Activated naive CD4-positive, alpha-beta T cell treated with anti-CD3 and anti-CD28 coated beads, Interleukin-2, amount 10 ng/mL, durations not matched to agents 7 days and 5 days (primary cell): ENCODE measurements at regions of chr22 and their contacts with region 1.

Region 1: DNA sequence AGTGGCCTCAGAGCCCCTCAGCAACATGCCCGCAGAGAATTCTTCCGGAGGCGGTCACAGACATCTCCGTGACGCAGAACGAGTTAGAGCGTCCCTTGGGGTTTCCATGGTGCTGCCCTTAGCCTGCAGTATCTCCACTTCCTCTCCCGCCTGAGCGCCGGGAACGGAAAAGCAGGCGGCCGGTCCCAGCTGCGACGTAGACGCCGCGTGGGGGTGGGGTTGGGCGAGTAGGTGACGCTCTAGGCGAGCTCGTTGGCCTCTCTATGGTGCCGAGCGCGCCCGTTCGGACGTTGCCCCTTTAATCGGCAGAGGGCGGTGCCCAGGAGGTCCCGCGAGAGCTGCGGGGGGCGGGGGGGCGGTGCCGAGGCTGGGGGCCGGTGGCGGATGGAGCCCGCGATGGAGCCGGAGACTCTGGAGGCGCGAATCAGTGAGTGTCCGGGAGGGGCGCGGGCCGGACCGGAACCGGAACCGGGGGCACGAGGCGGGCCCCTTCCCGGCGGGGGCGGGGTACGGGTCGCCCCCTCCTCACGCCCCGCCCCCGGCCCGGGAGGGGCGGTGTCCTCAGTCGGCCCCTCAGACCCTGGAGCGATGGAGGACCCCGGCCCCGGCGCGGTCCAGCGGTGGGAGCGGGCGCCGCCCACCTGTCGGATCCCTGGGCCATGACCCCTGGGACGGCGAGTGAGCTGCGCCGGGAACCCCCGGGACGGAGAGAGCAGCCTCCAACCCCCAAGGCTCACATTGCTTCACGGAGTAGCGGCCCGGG is at the start of gene GGA1:
- DNase-seq: peak; percentile 97
- H3K4me3 Mint-ChIP-seq: peak within 1 kb of the TSS; percentile 97
- H3K27ac Mint-ChIP-seq: peak within 1 kb of the TSS; percentile 96
- H3K4me1 Mint-ChIP-seq: peaks cover 63% of the 10 kb centered on the region
- H3K27me3 Mint-ChIP-seq: peaks cover 14% of the 10 kb centered on the region

Region 2: DNA sequence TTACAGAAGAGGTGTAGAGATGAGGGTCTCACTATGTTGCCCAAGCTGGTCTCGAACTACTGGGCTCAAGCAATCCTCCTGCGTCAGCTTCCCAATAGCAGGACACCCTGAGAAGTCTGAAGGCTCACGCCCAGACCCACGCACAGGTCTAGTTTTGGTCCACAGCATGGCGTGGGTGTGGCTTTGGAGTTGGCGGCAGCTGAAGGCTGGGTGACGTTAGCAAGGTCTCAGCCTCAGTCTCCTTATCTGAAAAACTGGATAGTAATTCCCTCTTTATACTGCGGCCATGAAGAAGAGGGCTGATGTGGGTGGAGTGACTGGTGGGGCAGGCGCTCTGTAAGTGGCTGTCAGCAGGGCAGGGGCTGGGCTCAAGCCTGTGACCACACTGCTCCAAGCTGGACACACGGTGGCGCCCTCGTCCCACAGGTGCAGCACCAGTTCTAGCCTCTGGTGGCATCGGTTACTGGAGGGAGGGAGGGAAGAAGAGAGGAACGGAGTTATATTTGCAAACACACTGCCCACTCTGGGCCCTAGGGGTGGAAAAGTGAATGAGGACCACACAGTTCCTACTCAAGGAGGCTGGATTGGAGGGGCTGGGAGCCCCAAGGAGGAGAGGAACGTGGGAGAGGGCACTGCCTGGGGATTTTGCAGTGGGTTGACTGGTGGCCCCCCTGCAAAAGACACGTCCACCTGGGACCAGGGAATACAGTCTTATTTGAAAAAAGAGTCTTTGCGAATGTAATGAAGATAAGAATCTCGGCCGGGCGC is 69.9 kb before region 1 on chr22:
- CTCF ChIA-PET with region 1: interaction called, 21 read pairs
- DNase-seq: peak; percentile 93
- H3K4me3 Mint-ChIP-seq: no peak overlapping the region
- H3K27ac Mint-ChIP-seq: no peak overlapping the region
- H3K4me1 Mint-ChIP-seq: peaks cover 41% of the 10 kb centered on the region
- H3K27me3 Mint-ChIP-seq: peaks cover 67% of the 10 kb centered on the region

Region 3: DNA sequence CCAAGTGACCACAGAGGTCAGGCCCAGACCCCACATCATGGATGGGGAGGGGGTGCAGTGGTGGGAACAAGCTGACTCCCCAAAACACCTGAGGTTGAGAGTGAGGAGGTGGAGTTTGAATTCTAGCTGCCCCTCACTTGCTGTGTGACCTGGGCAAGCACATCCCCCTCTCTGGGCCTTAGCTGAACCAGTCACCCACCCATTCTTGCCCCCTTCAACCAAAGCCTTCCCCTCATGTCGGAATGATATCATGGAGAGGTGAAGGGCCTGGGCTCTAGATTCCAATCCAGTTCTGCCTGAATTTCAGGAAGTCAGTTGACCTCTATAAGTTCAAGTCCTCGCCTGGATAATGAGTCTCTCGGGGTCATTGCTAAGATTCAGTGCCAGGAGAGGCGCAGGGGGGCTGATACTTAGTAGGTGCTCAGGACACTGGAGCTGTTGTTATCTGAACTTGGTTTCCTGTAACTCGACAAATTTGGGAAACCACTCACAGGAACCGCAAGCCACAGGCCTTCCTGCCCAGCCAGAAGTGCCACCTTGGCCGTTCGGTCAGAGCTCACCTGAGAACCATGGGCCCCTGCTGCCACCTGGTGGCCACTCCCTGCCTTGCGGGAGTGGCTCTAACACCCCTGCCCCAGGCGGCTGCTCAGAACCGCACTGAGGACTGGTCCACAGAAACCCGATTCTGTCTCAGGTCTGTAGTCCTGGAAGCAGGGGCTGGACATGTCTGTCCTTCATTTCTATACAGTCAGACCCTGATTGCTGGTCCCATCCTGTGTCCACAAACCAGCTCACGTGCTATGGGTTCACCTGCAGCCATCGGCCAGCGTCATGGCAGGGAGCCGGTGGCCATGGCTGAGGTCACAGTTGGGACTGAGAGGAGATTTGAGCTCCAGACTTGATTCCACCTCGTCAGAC is 41.5 kb before region 1 on chr22:
- CTCF ChIA-PET with region 1: interaction called, 17 read pairs
- DNase-seq: peak; percentile 95
- H3K4me3 Mint-ChIP-seq: peak overlapping the region; percentile 38
- H3K27ac Mint-ChIP-seq: peak overlapping the region; percentile 81
- H3K4me1 Mint-ChIP-seq: peaks cover 23% of the 10 kb centered on the region
- H3K27me3 Mint-ChIP-seq: peaks cover 100% of the 10 kb centered on the region

Region 4: DNA sequence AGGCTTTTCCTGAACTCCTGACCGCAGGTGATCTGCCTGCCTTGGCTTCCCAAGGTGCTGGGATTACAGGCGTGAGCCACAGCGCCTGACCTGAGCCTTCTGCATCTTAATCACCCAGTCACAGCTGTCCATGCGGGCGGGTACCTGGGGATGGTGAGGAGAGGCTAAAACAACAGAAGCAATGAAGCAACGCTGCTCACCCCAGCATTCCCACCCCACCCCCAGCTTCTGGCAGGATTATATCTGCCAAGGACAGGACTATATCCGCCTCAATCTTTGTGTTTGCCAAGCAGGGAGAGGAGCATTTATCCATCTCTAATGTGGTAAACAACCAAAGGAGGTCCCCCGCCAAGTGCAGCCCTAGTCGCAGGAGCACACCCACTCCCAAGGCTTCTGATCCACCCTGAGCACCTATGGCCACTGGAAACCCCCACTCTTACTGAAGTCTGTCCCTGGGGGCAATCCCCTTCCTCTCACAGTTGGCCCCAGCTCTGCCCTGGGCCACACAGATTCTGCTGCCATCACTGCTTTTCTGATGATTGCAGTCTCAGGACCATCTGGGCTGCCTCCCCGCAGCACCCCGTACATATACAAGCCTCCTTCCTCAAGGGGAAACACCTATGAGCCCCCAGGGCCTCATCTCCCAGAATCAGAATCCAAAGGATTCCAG is 20.0 kb before region 1 on chr22:
- CTCF ChIA-PET with region 1: interaction called, 12 read pairs
- DNase-seq: no peak
- H3K4me3 Mint-ChIP-seq: no peak overlapping the region
- H3K27ac Mint-ChIP-seq: no peak overlapping the region
- H3K4me1 Mint-ChIP-seq: peaks cover 13% of the 10 kb centered on the region
- H3K27me3 Mint-ChIP-seq: peaks cover 61% of the 10 kb centered on the region

Region 5: GRCh38 chr22:37633625-37634416 is 25.2 kb after region 1 on chr22:
- CTCF ChIA-PET with region 1: interaction called, 21 read pairs
- DNase-seq: peak; percentile 67
- H3K4me3 Mint-ChIP-seq: peak overlapping the region; percentile 46
- H3K27ac Mint-ChIP-seq: peak overlapping the region; percentile 90
- H3K4me1 Mint-ChIP-seq: peaks cover 73% of the 10 kb centered on the region
- H3K27me3 Mint-ChIP-seq: no peaks in the 10 kb centered on the region

Region 6: GRCh38 chr22:37643225-37643847 is 34.7 kb after region 1 on chr22:
- CTCF ChIA-PET with region 1: interaction called, 10 read pairs
- DNase-seq: peak; percentile 93
- H3K4me3 Mint-ChIP-seq: peak overlapping the region; percentile 49
- H3K27ac Mint-ChIP-seq: peak overlapping the region; percentile 83
- H3K4me1 Mint-ChIP-seq: peaks cover 40% of the 10 kb centered on the region
- H3K27me3 Mint-ChIP-seq: no peaks in the 10 kb centered on the region

Region 7: DNA sequence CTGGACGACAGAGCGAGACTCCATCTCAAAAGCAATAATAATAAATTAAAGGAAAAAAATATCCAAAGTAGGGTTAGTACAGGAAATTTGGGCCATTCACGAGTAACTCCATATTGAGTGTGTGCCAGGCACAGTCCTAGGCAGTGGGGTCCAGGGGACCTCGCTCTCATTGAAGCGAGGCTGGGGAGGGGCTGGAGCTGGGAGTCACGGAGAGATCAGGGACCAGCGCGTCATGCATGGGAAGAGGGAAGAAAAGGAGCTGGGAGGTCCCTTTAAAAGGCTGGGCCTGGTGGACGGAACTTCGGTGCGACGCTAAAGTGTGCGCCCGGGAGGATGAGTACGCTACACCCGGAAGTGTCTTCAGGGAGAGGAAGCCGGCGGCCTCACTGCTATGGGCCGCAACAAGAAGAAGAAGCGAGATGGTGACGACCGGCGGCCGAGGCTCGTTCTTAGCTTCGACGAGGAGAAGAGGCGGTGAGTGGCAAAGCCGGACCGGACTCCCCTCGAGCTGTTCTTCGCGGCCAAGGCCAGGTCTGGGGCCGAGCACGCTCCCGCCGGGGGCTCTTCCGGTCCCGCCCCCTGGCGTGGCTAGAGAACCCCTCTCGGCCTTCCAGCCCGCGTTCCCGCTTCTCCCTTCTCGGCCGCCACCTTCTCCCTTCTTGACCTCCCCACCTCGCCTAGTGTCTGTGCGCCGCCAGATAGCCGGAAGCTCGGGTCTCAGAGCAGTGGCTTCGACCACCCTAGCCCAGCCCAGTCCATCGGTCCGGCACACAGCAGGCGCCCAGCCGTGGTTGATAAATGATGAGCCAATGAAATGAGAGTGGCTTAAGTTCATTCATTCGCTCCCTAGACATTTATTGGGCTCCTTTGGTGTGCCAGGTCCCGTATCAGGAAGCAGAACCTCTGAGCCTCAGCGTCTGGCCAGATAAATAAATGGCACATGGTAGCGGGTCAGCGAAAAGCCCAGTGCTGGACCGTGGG is 77.6 kb after region 1 on chr22 and contains the start of gene NOL12:
- CTCF ChIA-PET with region 1: interaction called, 48 read pairs
- DNase-seq: peak; percentile 83
- H3K4me3 Mint-ChIP-seq: peak within 1 kb of the TSS; percentile 92
- H3K27ac Mint-ChIP-seq: peak within 1 kb of the TSS; percentile 90
- H3K4me1 Mint-ChIP-seq: peaks cover 32% of the 10 kb centered on the region
- H3K27me3 Mint-ChIP-seq: no peaks in the 10 kb centered on the region

Region 8: GRCh38 chr22:37708580-37709444 is 100.2 kb after region 1 on chr22:
- CTCF ChIA-PET with region 1: no interaction called
- DNase-seq: no peak
- H3K4me3 Mint-ChIP-seq: no peak overlapping the region
- H3K27ac Mint-ChIP-seq: no peak overlapping the region
- H3K4me1 Mint-ChIP-seq: no peaks in the 10 kb centered on the region
- H3K27me3 Mint-ChIP-seq: no peaks in the 10 kb centered on the region

Region 9: GRCh38 chr22:37817705-37818408 is 209.2 kb after region 1 on chr22:
- CTCF ChIA-PET with region 1: no interaction called
- DNase-seq: peak; percentile 84
- H3K4me3 Mint-ChIP-seq: peak overlapping the region; percentile 15
- H3K27ac Mint-ChIP-seq: no peak overlapping the region
- H3K4me1 Mint-ChIP-seq: peaks cover 18% of the 10 kb centered on the region
- H3K27me3 Mint-ChIP-seq: peaks cover 56% of the 10 kb centered on the region